CD8-positive, alpha-beta memory T cell (primary cell): ENCODE measurements at regions of chr6 and their contacts with region 1.

Region 1: GRCh38 chr6:31665501-31666336 is at the start of gene CSNK2B:
- DNase-seq: peak; percentile 98
- H3K4me3 ChIP-seq: peak within 1 kb of the TSS; percentile 97
- H3K4me3 Mint-ChIP-seq: peak within 1 kb of the TSS; percentile 93 to 99 (median 94)
- H3K27ac ChIP-seq: peak within 1 kb of the TSS; percentile 97
- H3K27ac Mint-ChIP-seq: peak within 1 kb of the TSS; percentile 91 to 100 (median 98)
- H3K4me1 ChIP-seq: peaks cover 47% of the 10 kb centered on the region
- H3K4me1 Mint-ChIP-seq: peaks cover 55 to 73% (median 61%) of the 10 kb centered on the region in 3 donors
- H3K27me3 ChIP-seq: no peaks in the 10 kb centered on the region
- H3K27me3 Mint-ChIP-seq: no peaks in the 10 kb centered on the region
- total RNA-seq, gene CSNK2B: 323 to 334 TPM

Region 2: DNA sequence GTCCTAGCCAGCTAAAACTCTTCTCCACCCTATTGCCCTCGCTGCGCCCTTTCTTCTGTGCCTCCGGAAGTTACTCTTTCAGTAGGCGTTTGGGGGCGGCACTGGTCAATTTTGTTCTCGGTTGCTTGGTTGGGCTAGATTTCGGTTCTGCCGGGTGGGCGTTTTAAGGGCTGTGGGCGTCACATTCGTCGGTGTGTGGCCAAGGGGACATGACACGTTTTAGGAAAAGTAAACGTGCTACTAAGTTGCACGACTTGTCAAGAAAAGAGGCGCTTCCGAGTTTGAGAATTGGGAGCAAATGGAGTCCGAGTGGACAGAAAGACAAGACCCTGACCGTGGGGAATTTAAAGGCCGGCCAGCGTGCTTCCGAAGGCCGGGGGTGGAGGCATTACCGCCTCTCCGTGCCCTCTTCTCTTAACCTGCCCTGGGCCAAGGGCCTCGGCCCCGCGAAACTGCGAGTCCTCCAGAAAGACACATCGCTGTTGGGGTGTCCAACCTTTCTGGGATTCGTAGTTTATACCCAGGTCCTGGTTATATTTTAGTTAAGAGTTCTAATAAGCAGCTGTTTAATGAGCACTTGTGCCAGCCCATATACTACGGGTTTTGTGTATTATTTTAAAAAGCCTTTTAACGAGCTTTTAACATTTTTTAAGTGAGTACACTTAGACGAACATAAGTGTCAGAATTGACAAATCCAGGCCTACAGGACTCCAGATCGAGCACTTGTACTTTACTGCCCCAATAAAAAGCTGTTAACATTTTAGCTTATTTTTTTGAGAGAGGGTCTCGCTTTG is 12.6 kb before region 1 on chr6:
- CTCF ChIA-PET with region 1: interaction called, 39 read pairs
- POLR2A ChIA-PET with region 1: interaction called, 112 read pairs
- DNase-seq: peak in 4 of 5 donors; percentile 79 to 92 (median 88)
- H3K4me3 ChIP-seq: peak overlapping the region; percentile 97
- H3K4me3 Mint-ChIP-seq: peak overlapping the region; percentile 90 to 99 (median 96)
- H3K27ac ChIP-seq: peak overlapping the region; percentile 94
- H3K27ac Mint-ChIP-seq: peak overlapping the region; percentile 95 to 100 (median 100)
- H3K4me1 ChIP-seq: peaks cover 30% of the 10 kb centered on the region
- H3K4me1 Mint-ChIP-seq: peaks cover 49 to 77% (median 61%) of the 10 kb centered on the region in 3 donors
- H3K27me3 ChIP-seq: no peaks in the 10 kb centered on the region
- H3K27me3 Mint-ChIP-seq: peaks cover 0 to 9% of the 10 kb centered on the region in 2 donors

Region 3: GRCh38 chr6:31702819-31703522 is 37.3 kb after region 1 on chr6 and contains the start of gene ABHD16A:
- CTCF ChIA-PET with region 1: no interaction called
- POLR2A ChIA-PET with region 1: interaction called, 13 read pairs
- DNase-seq: peak; percentile 95 to 97 (median 96)
- H3K4me3 ChIP-seq: peak within 1 kb of the TSS; percentile 88
- H3K4me3 Mint-ChIP-seq: peak within 1 kb of the TSS; percentile 92 to 99 (median 96)
- H3K27ac ChIP-seq: peak within 1 kb of the TSS; percentile 98
- H3K27ac Mint-ChIP-seq: peak within 1 kb of the TSS; percentile 88 to 100 (median 96)
- H3K4me1 ChIP-seq: peaks cover 24% of the 10 kb centered on the region
- H3K4me1 Mint-ChIP-seq: peaks cover 29 to 40% (median 36%) of the 10 kb centered on the region in 3 donors
- H3K27me3 ChIP-seq: no peaks in the 10 kb centered on the region
- H3K27me3 Mint-ChIP-seq: peaks cover 0 to 1% of the 10 kb centered on the region in 2 donors
- total RNA-seq, gene ABHD16A: 37.0 to 41.0 TPM

Region 4: GRCh38 chr6:31763619-31763940 is 97.9 kb after region 1 on chr6:
- CTCF ChIA-PET with region 1: no interaction called
- POLR2A ChIA-PET with region 1: no interaction called
- DNase-seq: no peak
- H3K4me3 ChIP-seq: no peak overlapping the region
- H3K4me3 Mint-ChIP-seq: no peak overlapping the region
- H3K27ac ChIP-seq: no peak overlapping the region
- H3K27ac Mint-ChIP-seq: peak overlapping the region in 4 of 8 donors; percentile 33 to 70 (median 44)
- H3K4me1 ChIP-seq: no peaks in the 10 kb centered on the region
- H3K4me1 Mint-ChIP-seq: no peaks in the 10 kb centered on the region
- H3K27me3 ChIP-seq: no peaks in the 10 kb centered on the region
- H3K27me3 Mint-ChIP-seq: no peaks in the 10 kb centered on the region